ENCODE measurements at regions of chr11 and their contacts with region 1.

Region 1: GRCh38 chr11:128172046-128172878 is 415.1 kb downstream of the ETS1 start:
- DNase-seq: peak; percentile 36 to 94 (median 84)

Region 2: GRCh38 chr11:128116447-128116846 is 55.8 kb before region 1 on chr11:
- intact Hi-C with region 1: no loop called
- DNase-seq: peak in 8 of 42 donors; percentile 2 to 49 (median 10)

Region 3: GRCh38 chr11:128135451-128135850 is 36.8 kb before region 1 on chr11:
- intact Hi-C with region 1: no loop called
- DNase-seq: no peak

Region 4: GRCh38 chr11:128552783-128553661 is 380.8 kb after region 1 on chr11:
- intact Hi-C with region 1: no loop called
- DNase-seq: peak; percentile 16 to 92 (median 74)

Region 5: DNA sequence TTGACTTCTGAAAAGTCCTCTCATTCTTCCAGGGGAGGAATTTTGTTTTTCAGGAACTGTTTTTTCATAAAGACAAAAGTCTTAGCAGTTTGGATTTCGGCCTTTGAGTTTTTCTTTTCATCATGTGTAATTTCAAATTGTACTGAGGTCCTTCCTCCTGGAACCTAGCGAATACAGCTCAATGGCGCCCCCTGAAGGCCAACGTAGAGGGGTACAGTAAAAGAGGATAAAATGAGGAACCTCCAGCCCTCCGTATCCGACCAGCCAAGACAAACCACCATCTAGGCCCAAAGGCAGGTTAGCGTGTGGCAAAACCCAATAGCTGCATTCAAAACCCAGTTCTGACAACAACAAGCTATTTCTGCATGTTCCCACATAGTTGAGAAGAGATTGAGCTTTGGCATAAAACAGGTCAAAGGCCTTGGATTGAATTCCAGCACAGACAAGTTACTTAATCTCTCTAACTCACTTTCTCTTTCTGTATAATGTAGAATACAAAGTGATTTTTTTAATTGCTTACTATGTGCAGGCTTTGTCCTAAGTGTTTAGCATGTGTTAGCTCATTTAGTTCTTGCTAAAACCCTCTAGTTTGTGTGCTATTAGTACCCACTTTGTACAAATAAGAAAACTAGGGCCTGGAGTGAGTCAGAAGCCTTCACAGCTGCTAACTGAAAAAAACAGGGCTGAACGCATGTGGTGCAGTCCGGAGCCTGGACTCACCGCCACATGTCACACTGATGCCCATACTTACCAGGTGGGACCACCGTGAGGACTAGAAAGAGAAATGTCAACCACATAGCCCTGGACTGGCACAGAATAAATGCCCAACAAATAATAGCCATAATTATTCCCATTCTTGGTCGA is 458.3 kb after region 1 on chr11:
- intact Hi-C with region 1: loop called (anchors 5 kb)
- DNase-seq: peak; percentile 67 to 94 (median 84)

Region 6: DNA sequence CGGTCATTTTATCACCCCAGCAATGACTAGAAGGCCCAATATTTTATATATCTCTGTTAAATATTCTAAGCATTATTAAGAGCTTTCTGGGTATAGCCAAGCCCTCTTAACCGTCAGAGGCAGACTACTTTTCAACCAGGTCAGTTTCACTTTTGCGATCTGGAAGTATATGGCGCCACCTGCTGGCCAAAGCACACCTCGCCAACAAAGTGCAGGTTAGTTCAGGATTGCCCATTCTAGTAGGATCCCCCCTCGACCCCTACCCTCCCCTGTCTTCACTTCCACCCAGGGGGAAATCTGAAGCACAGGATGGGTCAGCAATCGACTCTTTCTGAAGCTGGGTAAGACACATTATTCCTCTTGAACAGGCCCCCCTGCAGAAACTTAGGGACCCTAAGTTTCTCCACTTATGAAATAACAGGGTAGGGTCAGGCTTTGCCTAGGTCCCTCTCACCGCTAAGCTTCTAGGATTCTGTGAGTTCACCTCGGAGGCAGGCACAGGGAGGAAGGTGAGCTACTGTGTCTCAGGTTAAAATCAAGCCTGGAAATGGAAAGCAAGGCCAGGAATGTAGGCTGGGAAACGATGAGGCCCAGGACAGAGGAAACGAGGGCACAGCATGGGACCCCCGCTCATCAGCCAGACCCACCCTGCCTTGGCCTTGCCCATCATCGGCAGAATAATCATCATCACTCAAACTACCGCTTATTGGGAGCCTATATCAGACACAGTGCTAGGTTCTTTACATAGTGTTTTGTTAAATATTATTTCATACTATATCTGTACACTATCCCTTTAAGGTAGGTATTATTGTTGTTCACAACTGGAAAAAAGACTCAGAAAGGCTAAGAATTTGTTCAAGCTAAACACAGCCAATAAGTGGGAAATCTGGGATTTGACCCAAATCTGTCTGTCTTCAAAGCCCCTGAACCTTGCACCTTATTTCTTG is 659.2 kb after region 1 on chr11:
- intact Hi-C with region 1: loop called (anchors 5 kb)
- DNase-seq: peak; percentile 44 to 94 (median 84)

Measured in head of caudate nucleus (tissue), 42 donors.